PC-3 (cell line): ENCODE measurements at regions of chr16 and their contacts with region 1.

Region 1: DNA sequence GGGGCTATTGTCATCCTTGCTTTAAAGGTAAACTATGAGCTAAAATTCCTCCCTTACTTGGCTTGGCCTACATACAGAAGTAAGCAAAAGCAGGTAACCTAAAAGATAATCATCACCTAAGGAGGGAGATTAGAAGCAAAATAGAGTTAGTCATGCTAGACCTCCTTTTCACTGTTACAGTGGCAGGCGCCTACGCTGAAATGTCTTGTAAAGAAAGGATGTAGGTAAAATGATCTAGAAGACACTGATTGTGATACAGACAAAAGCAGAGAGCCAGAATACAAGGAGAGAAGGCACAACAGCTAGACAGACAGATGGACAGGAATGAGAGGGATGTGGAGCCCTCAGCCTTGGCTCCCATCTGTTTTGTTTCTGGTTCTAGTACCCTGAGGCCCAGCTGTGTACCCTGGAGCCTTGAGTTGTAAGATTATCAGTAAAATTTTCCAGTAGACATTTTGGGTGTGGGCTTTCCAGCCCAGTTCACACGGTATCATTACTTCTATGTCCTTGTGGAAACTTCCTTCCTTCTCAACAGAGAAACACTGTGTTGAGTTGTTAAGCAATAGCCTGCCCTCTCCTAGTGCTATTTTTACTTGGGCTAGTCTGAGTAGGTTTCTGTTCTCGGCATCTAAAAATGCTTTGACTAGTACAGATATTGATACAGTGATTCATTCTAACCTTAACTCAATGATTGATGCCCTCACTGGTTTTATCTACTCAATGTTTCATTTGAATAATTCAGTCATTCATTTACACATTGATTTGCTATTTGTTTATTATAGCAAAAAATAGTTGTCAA is 7.7 kb upstream of the C16orf78 start:
- DNase-seq: no peak
- ATAC-seq: no peak
- H3K4me3 ChIP-seq: no peak overlapping the region
- H3K27ac ChIP-seq: no peak overlapping the region
- H3K4me1 ChIP-seq: no peaks in the 10 kb centered on the region
- H3K27me3 ChIP-seq: no peaks in the 10 kb centered on the region
- CTCF ChIP-seq: no peak

Region 2: DNA sequence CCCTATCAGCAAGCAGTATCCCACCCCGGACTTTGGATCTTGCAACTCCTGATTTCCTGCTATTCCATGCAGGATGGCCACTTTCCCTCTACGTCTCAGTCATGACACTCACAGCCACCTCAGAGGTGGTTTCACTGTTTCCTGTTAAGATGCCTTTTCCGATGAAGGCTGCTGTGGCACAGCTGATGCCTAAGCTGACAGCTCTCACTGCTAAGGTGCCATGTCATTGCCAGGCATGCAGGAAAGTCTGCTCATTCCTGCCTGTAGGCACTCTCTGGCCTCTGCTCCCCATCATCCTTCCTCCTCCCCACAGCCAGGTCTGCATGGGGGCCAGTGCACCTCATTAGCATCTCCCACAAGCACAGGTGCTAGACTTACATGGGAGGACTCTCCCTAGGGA is 257.3 kb before region 1 on chr16:
- CTCF ChIA-PET with region 1: no interaction called
- POLR2A ChIA-PET with region 1: no interaction called
- intact Hi-C with region 1: no loop called
- DNase-seq: no peak
- ATAC-seq: no peak
- H3K4me3 ChIP-seq: no peak overlapping the region
- H3K27ac ChIP-seq: no peak overlapping the region
- H3K4me1 ChIP-seq: no peaks in the 10 kb centered on the region
- H3K27me3 ChIP-seq: peaks cover 43% of the 10 kb centered on the region; the same call in 1 of the 2 replicates
- CTCF ChIP-seq: no peak

Region 3: GRCh38 chr16:50741808-50742575 is 1376.1 kb after region 1 on chr16 and contains the start of gene CYLD:
- CTCF ChIA-PET with region 1: no interaction called
- POLR2A ChIA-PET with region 1: interaction called, 30 read pairs
- intact Hi-C with region 1: no loop called
- DNase-seq: peak; percentile 97
- ATAC-seq: peak; percentile 97
- H3K4me3 ChIP-seq: peak within 1 kb of the TSS; percentile 77
- H3K27ac ChIP-seq: no peak within 1 kb of the TSS
- H3K4me1 ChIP-seq: peaks cover 34% of the 10 kb centered on the region
- H3K27me3 ChIP-seq: no peaks in the 10 kb centered on the region
- CTCF ChIP-seq: no peak
- total RNA-seq, gene CYLD: 8.5 and 8.6 TPM in 2 replicates